A549 (cell line): ENCODE measurements at regions of chr17 and their contacts with region 1.

Region 1: DNA sequence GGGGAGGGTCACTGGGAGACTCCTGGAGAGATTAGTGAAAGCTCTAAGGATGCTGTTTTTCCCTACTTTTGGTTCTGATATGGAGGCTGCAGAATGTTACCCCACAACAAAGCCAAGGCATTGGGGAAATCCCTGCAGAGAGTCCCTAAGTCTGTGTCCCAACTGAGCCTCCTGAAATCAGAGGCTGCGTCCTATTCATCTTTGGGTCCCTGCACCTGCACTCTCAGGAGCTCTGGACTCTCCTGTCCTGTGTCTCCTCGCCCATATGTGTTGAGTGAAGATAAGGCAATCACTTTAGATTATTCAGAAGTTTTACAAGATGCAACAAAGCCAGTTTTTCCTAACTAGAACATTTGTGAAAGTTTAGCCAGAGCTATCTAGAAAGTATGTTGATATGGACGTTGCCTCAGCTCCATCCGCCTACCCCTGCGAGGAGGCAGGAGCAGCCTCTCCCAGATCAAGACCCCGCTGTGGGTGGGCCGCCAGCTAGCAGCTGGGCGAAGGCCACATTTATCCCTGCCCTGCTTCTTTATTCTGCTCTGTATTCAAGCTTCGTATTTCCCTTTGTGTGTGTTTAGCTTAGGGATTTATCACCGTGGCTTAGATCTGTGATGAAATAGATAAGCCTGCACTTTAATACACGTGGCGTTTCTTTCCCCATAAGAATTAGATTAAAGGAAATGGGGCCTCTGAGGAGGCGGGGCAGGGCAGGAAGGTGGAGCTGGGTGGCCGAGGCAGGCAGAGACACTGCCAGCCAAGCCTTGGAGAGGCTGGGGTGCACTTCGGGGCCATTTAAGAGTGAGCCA is 37.4 kb downstream of the SHISA6 start:
- DNase-seq: no peak
- ATAC-seq: no peak
- H3K4me3 ChIP-seq: no peak overlapping the region
- H3K27ac ChIP-seq: no peak overlapping the region
- H3K4me1 ChIP-seq: no peaks in the 10 kb centered on the region
- CTCF ChIP-seq: no peak
- EP300 ChIP-seq: no peak
- POLR2A ChIP-seq: no peak
- RAD21 ChIP-seq: no peak

Region 2: DNA sequence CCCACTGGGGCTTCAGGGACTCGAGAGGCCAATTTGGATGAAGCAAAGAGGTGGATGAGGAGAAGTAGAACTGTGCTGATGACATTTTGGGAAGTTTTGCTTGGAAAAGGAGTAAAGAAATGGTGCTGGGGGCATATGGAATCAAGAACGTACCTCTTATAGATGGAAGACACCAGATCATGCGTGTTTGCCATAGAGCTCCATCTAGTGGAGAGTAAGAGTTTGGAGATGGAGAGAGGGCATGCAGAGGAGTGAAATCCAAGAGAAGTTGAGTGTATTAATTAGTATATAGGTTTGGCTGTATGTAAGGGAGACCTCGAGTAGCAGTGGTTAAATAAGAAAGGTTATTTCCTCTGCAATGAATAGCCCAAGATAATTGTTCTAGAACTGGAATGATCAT is 18.6 kb after region 1 on chr17:
- CTCF ChIA-PET with region 1: interaction called, 11 read pairs
- POLR2A ChIA-PET with region 1: no interaction called
- DNase-seq: peak; percentile 44
- ATAC-seq: peak in 1 of 2 experiments; percentile 82; a peak in 3 of 6 replicates
- H3K4me3 ChIP-seq: no peak overlapping the region
- H3K27ac ChIP-seq: no peak overlapping the region
- H3K4me1 ChIP-seq: no peaks in the 10 kb centered on the region
- CTCF ChIP-seq: peak; percentile 47
- EP300 ChIP-seq: no peak
- POLR2A ChIP-seq: no peak
- RAD21 ChIP-seq: peak in 1 of 2 experiments; percentile 54; a peak in 2 of 5 replicates